ENCODE measurements at regions of chr1 and their contacts with region 1.

Region 1: DNA sequence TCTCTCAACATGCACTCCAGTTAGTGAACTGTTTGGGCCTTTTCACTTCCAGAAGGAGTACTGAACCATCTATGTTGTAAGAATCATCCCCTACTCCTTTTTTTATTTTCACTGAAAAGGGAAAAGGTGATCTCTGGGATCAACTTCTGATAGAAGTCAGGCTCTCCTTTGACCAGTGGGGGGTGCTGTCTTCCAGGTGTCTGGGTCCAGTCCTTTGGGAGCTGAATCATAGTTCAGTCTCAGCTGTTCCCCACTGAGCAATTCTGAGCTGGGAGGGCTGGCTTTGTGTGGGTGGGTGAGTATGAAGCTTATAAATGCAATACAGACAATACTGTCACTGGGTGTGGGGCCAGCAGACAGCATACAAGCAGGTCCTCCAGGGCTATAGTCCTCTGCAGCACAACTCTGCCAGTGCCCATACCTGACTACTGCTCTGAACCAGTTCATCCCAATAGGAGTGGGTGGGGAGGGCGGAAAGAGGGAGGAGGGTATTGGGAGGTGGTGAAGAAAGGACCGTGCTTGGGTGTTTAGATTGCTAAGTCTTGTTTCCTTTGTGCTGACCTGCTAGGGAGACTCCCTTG is 12.5 kb upstream of the SARS1 start:
- DNase-seq: peak; percentile 49
- H3K4me3 ChIP-seq: no peak overlapping the region
- H3K27ac ChIP-seq: no peak overlapping the region
- H3K4me1 ChIP-seq: no peaks in the 10 kb centered on the region
- H3K27me3 ChIP-seq: no peaks in the 10 kb centered on the region
- CTCF ChIP-seq: peak in 5 of 6 experiments; percentile 19 to 49 (median 42)
- POLR2A ChIP-seq: no peak

Region 2: DNA sequence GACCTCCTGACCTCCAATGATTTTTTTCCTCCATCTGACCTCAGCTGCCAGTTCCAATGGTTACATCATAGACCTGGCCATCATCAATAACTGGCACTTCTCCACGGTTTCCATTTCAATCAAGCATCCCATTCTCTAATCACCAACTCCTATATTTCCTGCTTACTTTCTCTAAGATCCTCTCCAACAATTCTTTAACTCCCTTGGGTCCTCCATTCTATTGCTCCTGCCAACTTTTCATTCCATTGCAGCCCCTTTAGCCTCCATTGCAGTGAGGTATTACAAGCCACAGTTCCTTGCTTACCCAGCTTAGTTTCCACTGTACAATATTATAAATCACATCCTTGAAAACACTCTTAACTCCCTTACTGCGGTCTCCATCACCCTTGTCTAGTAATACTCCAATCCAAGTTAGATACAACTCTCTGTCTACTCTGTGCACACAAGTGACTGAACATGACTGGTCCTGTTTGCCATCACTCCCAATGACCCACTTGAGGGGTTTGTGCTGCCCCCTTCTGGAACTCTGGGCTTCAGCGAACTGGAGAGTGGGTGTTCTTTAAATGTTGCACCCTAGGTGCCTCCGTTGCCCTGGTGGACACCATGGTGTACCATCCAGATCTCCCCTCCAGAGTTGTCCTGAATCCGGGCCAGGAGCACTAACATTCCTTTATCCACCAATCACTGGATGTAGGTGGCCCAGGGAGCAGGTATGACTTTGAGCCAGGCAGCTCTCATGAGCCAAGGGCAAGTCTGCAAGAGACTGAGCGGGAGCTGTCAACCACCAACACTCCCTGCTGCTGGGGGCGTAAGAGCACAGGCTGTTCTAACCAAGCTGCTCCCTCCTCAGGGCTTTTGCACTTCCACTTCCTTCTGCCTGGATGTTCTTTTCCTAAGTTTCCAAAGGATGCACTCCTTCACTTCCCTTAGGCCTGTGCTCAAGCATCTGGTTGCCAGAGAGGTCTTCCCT is 492.2 kb before region 1 on chr1:
- intact Hi-C with region 1: no loop called
- DNase-seq: peak in 1 of 2 donors; percentile 13
- H3K4me3 ChIP-seq: no peak overlapping the region
- H3K27ac ChIP-seq: no peak overlapping the region
- H3K4me1 ChIP-seq: no peaks in the 10 kb centered on the region
- H3K27me3 ChIP-seq: no peaks in the 10 kb centered on the region
- CTCF ChIP-seq: no peak
- POLR2A ChIP-seq: no peak

Region 3: GRCh38 chr1:109112652-109113285 is 88.4 kb before region 1 on chr1:
- intact Hi-C with region 1: loop called (anchors 5 kb)
- DNase-seq: peak; percentile 94 to 95
- H3K4me3 ChIP-seq: peak overlapping the region in 1 of 3 donors; percentile 13
- H3K27ac ChIP-seq: no peak overlapping the region
- H3K4me1 ChIP-seq: peaks cover 13 to 21% of the 10 kb centered on the region in 2 donors
- H3K27me3 ChIP-seq: no peaks in the 10 kb centered on the region
- CTCF ChIP-seq: peak; percentile 75 to 95 (median 94)
- POLR2A ChIP-seq: no peak

Region 4: GRCh38 chr1:109148987-109149561 is 52.1 kb before region 1 on chr1:
- intact Hi-C with region 1: no loop called
- DNase-seq: no peak
- H3K4me3 ChIP-seq: no peak overlapping the region
- H3K27ac ChIP-seq: peak overlapping the region; percentile 4 to 70 (median 55)
- H3K4me1 ChIP-seq: peaks cover 34 to 38% of the 10 kb centered on the region in 2 donors
- H3K27me3 ChIP-seq: no peaks in the 10 kb centered on the region
- CTCF ChIP-seq: no peak
- POLR2A ChIP-seq: no peak

Region 5: DNA sequence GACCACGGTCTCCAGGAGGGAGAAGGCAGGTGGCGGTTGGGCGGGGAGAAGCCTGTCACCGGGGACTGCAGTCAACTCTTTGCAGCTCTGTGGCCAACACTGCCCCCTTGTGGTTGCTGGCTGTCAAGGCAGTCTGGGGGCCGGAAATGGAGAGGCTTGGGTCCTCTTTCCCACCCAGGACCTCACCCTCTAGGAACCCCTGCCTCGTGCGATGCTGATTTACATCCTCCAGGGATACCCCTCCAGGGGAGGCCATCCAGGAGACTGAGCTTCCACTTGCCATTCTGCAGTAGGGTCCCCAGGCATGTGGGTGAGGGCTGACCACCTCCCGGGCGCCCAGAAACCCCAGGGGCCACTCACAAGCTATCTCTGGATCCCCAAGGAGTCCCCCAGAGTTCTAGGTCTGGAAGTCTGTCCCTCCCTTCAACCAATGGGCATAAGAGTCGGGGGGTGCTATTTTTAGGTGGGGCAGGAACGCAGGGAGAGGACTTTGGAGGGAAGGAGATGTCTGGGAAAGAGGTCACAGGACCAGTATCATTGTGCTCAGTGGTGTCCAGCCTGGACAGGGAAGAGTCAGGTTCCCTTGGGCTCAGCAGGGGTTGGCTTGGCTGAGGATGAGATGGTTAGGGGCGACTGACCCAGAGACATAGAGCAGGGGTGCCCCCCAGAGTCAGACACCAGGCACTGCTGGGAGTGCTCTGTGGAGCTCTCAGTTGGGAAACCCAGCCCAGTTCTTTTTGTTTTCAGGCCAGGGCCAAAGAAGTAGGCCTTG is 331.3 kb after region 1 on chr1:
- intact Hi-C with region 1: no loop called
- DNase-seq: peak; percentile 76 to 83
- H3K4me3 ChIP-seq: no peak overlapping the region
- H3K27ac ChIP-seq: no peak overlapping the region
- H3K4me1 ChIP-seq: peaks cover 4 to 6% of the 10 kb centered on the region in 2 donors
- H3K27me3 ChIP-seq: no peaks in the 10 kb centered on the region
- CTCF ChIP-seq: peak; percentile 90 to 98 (median 96)
- POLR2A ChIP-seq: no peak